Cardiac septum (tissue), 1 donor: ENCODE measurements at regions of chr1 and their contacts with region 1.

Region 1: GRCh38 chr1:92831762-92832536 is at the start of gene RPL5:
- DNase-seq: peak; percentile 99
- total RNA-seq, gene RPL5: 455 TPM

Region 2: GRCh38 chr1:92755541-92756461 is 76.1 kb before region 1 on chr1:
- intact Hi-C with region 1: loop called (anchors 5 kb)
- DNase-seq: peak; percentile 85

Region 3: DNA sequence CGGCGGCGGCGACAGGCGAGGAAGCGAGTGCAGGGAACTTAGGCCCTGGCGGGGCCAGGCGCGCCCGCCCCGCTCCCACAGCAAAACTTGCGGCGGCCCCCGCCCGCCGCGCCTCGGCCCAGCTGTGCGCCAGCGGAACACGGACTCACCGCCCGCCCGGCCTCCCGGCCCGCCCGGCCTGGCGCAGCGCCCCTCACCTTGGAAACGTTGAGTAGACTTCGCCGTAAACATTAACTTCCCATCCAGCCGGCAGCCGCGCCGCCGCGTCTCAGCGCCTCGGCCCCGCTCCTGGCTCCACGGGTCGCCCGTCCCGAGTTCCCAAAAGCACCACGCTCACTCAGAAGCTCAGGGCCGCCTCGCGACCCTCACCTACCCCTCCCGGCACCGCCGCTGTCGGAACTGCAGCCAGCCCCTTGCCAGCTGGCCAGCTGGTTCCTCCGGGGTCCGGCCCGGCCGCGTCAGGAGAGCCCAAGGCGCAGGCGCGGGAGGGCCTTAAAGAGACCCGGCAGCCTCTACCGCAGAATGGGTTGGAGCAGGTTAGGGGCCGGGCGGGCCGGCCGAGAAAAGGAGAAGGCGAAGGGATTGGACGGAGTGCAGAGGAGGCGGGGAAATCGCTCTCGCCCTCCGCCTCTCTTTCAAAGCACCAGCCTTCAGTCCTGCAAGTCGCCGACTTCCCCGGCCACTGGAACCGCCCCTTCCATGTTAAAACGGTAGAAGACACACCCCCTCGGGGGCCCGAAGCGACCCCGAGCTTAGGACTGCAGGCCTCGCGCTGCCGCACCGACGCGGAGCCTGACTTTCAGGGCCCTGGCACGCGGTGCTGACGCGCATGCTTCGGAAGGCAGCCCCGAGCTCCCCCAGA is 47.1 kb before region 1 on chr1 and contains the start of gene EVI5:
- intact Hi-C with region 1: loop called (anchors 5 kb)
- DNase-seq: peak; percentile 97
- total RNA-seq, gene EVI5: 30.7 TPM

Region 4: DNA sequence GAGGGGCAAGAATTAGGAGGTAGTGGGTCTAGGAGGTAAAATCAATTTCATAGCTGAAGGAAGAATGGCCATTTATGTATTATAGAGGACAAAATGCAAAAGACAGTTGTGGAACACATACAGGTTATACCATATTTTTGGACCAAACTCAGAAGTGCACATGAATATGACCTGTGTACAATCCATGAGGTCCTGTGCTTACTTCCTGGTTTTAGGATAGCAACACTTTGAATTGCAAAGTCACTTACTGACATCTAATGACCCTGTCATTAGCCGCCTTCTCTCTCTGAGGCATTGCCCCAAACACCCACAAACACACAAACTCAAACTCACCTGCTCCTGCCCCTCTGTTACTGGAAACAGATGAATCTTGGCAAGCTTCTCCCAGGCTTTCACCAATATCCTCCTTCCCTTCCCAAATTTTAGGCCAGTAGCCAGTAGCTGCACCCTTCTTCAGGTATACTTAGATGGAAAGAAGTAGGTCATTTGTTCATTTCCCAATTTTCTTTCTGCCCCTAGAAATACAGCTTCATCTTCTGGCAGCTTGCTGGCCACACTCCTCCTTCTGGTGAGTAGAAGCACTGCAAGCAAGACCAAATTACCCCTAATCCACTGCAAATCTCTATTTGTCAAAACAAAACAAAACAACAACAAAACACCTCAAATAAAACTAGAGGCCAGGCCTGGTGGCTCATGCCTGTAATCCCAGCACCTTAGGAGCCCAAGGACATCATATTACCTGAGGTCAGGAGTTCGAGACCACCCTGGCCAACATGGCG is 13.8 kb before region 1 on chr1:
- intact Hi-C with region 1: no loop called
- DNase-seq: no peak